ENCODE measurements at regions of chrX and their contacts with region 1.

Region 1: GRCh38 chrX:68710870-68711576 is 63.6 kb downstream of the STARD8 start:
- DNase-seq: no peak
- ATAC-seq: peak; percentile 75
- H3K4me3 ChIP-seq: no peak overlapping the region
- H3K27ac ChIP-seq: no peak overlapping the region
- H3K4me1 ChIP-seq: no peaks in the 10 kb centered on the region
- H3K27me3 ChIP-seq: no peaks in the 10 kb centered on the region
- CTCF ChIP-seq: peak; percentile 49 to 53 (median 49); a peak in 5 of 6 replicates
- EP300 ChIP-seq: no peak
- POLR2A ChIP-seq: no peak
- RAD21 ChIP-seq: peak; percentile 76

Region 2: DNA sequence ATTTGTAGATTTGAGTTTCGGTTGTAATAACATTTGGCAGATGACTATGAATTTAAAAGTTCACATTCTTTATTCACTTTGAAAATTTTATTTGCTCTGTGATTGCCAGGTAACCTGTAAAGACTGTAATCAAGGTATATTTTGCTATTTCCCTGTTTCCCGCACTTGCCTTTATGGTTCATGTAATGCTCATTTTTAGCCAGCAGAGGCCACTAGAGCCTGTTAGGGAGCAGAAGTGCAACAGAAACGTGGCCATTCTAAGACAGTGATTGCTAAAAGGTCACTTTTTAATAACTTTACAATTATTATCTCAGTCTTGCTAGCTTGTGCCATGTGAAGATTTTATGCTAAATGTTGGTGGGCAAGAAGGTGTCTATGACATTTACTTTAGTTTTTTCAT is 199.8 kb before region 1 on chrX:
- CTCF ChIA-PET with region 1: interaction called, 10 read pairs
- POLR2A ChIA-PET with region 1: no interaction called
- RAD21 ChIA-PET with region 1: interaction called, 8 read pairs
- SMC1A ChIA-PET with region 1: interaction called, 13 read pairs
- in situ Hi-C with region 1: loop called (anchors 5 kb)
- intact Hi-C with region 1: loop called (anchors 1 kb)
- DNase-seq: no peak
- ATAC-seq: peak; percentile 78
- H3K4me3 ChIP-seq: no peak overlapping the region
- H3K27ac ChIP-seq: no peak overlapping the region
- H3K4me1 ChIP-seq: no peaks in the 10 kb centered on the region
- H3K27me3 ChIP-seq: no peaks in the 10 kb centered on the region
- CTCF ChIP-seq: peak; percentile 77 to 82 (median 82)
- EP300 ChIP-seq: no peak
- POLR2A ChIP-seq: no peak
- RAD21 ChIP-seq: peak; percentile 87

Region 3: GRCh38 chrX:68686097-68686977 is 24.7 kb before region 1 on chrX:
- CTCF ChIA-PET with region 1: no interaction called
- POLR2A ChIA-PET with region 1: no interaction called
- RAD21 ChIA-PET with region 1: no interaction called
- SMC1A ChIA-PET with region 1: no interaction called
- in situ Hi-C with region 1: no loop called
- intact Hi-C with region 1: no loop called
- DNase-seq: no peak
- ATAC-seq: peak; percentile 23; the same call in 2 of the 3 replicates
- H3K4me3 ChIP-seq: no peak overlapping the region
- H3K27ac ChIP-seq: no peak overlapping the region
- H3K4me1 ChIP-seq: no peaks in the 10 kb centered on the region
- H3K27me3 ChIP-seq: no peaks in the 10 kb centered on the region; a peak in 1 of 4 replicates
- CTCF ChIP-seq: no peak
- EP300 ChIP-seq: no peak
- POLR2A ChIP-seq: no peak
- RAD21 ChIP-seq: no peak

Region 4: DNA sequence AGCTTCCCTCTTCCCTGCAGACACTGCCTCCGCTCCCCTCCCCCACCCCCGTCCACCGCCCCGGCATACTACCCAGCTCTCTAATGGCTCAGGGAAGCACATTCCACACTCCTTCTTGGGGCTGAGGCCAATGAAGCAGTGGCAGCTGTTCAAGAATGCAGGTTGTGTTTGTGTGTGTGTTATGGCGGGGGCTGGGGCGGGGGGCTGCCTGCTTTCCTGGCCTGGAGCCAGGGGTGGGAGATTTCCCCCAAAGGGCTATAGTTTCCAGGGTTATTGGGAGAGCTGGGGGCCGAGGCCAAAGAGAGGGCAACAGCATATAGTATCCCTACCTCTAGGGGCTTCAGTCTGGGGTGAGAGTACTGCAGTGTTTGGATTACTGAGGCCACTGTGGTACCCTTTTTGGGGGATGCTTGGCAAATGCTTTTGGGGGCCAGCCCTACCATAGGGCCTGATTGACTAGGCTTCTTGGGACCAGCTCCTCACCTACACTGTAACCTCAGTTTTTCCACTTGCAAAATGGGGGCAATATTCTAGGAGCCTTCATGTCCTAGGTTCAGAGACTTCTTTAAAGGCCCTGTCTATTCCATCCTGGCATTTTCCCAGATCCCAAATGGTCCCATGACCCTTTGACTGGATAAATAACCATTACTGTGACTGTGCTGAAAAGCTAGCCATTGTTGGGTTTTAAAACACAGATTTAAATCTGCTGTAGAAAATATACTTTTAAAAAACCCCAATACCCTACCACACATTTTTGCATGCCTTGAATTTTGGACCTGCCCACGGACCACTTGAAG is 267.4 kb after region 1 on chrX:
- CTCF ChIA-PET with region 1: no interaction called
- POLR2A ChIA-PET with region 1: no interaction called
- RAD21 ChIA-PET with region 1: no interaction called
- SMC1A ChIA-PET with region 1: no interaction called
- in situ Hi-C with region 1: no loop called
- intact Hi-C with region 1: no loop called
- DNase-seq: no peak
- ATAC-seq: no peak
- H3K4me3 ChIP-seq: no peak overlapping the region
- H3K27ac ChIP-seq: no peak overlapping the region
- H3K4me1 ChIP-seq: no peaks in the 10 kb centered on the region
- H3K27me3 ChIP-seq: no peaks in the 10 kb centered on the region
- CTCF ChIP-seq: no peak
- EP300 ChIP-seq: no peak
- POLR2A ChIP-seq: no peak
- RAD21 ChIP-seq: no peak